Activated CD8-positive, alpha-beta T cell treated with anti-CD3 and anti-CD28 coated beads for 36 hours (primary cell): ENCODE measurements at regions of chr20 and their contacts with region 1.

Region 1: GRCh38 chr20:35303735-35304491 is 11.7 kb upstream of the FAM83C start:
- DNase-seq: peak; percentile 94
- ATAC-seq: peak; percentile 64
- H3K4me3 Mint-ChIP-seq: no peak overlapping the region
- H3K27ac Mint-ChIP-seq: peak overlapping the region; percentile 50
- H3K4me1 Mint-ChIP-seq: peaks cover 54% of the 10 kb centered on the region
- H3K27me3 Mint-ChIP-seq: no peaks in the 10 kb centered on the region
- CTCF ChIP-seq: peak; percentile 91

Region 2: DNA sequence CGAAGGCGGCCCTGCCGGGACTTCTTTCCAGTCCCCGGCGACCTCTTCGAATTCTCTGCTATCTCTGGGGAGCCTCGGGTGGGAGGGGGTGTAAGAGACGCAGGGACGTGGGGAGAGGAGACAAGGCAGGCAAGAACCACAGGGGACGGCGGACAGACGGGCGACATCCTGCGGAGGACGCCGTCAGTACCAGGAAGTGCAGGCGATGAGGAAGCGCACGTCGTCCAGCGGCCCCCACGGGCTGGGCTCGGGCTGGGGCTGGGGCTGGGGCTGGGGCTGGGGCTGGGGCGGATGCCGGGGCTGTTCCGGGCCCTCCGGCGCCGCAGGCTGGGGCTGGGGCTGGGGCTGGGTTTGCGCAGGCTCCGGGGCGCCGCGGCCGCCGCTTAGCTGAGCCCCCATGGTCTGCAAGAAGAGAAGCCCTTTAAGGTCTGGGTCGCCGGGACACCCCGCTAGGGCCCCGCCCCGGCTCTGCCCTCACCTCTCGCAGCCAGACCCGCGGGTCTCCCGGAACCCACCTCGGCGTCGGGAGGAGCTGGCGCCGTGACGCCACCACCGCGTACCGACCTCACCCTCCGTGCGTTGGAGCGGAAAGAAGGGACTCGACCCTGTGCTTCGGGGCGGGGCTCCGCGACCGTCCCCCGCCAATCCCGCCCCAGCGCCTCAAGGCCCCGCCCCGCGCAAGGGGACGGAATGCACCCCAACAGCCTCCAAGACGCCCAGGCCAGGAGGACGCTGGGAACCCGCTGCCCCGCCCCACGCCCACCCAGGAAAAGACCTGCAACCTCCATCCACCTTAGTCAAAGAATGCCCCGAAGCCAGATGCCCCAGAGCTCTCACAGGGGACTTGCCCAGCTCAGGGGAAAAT is 26.1 kb before region 1 on chr20 and contains the start of gene MMP24OS:
- CTCF ChIA-PET with region 1: interaction called, 22 read pairs
- POLR2A ChIA-PET with region 1: no interaction called
- intact Hi-C with region 1: no loop called
- DNase-seq: peak; percentile 93
- ATAC-seq: peak; percentile 95
- H3K4me3 Mint-ChIP-seq: peak within 1 kb of the TSS; percentile 98
- H3K27ac Mint-ChIP-seq: peak within 1 kb of the TSS; percentile 99
- H3K4me1 Mint-ChIP-seq: peaks cover 16% of the 10 kb centered on the region
- H3K27me3 Mint-ChIP-seq: no peaks in the 10 kb centered on the region
- CTCF ChIP-seq: no peak
- total RNA-seq, gene MMP24OS: 46.6 to 48.4 TPM

Region 3: GRCh38 chr20:35292376-35293285 is 11.3 kb before region 1 on chr20 and contains the start of gene FAM83C:
- CTCF ChIA-PET with region 1: interaction called, 13 read pairs
- POLR2A ChIA-PET with region 1: interaction called, 4 read pairs
- intact Hi-C with region 1: no loop called
- DNase-seq: no peak
- ATAC-seq: no peak
- H3K4me3 Mint-ChIP-seq: no peak within 1 kb of the TSS
- H3K27ac Mint-ChIP-seq: no peak within 1 kb of the TSS
- H3K4me1 Mint-ChIP-seq: no peaks in the 10 kb centered on the region
- H3K27me3 Mint-ChIP-seq: no peaks in the 10 kb centered on the region
- CTCF ChIP-seq: no peak
- total RNA-seq, gene FAM83C: not detected

Region 4: GRCh38 chr20:35329435-35330139 is 25.7 kb after region 1 on chr20:
- CTCF ChIA-PET with region 1: interaction called, 91 read pairs
- POLR2A ChIA-PET with region 1: interaction called, 4 read pairs
- intact Hi-C with region 1: no loop called
- DNase-seq: peak; percentile 80
- ATAC-seq: peak; percentile 87
- H3K4me3 Mint-ChIP-seq: no peak overlapping the region
- H3K27ac Mint-ChIP-seq: no peak overlapping the region
- H3K4me1 Mint-ChIP-seq: peaks cover 45% of the 10 kb centered on the region
- H3K27me3 Mint-ChIP-seq: no peaks in the 10 kb centered on the region
- CTCF ChIP-seq: peak; percentile 70

Region 5: GRCh38 chr20:35437491-35437998 is 133.6 kb after region 1 on chr20:
- CTCF ChIA-PET with region 1: interaction called, 20 read pairs
- POLR2A ChIA-PET with region 1: no interaction called
- intact Hi-C with region 1: no loop called
- DNase-seq: no peak
- ATAC-seq: no peak
- H3K4me3 Mint-ChIP-seq: no peak overlapping the region
- H3K27ac Mint-ChIP-seq: no peak overlapping the region
- H3K4me1 Mint-ChIP-seq: peaks cover 1% of the 10 kb centered on the region
- H3K27me3 Mint-ChIP-seq: peaks cover 6% of the 10 kb centered on the region
- CTCF ChIP-seq: no peak

Region 6: GRCh38 chr20:35454881-35455609 is 151.1 kb after region 1 on chr20 and contains the start of gene CEP250:
- CTCF ChIA-PET with region 1: interaction called, 85 read pairs
- POLR2A ChIA-PET with region 1: no interaction called
- intact Hi-C with region 1: no loop called
- DNase-seq: peak; percentile 96
- ATAC-seq: peak; percentile 99
- H3K4me3 Mint-ChIP-seq: peak within 1 kb of the TSS; percentile 90
- H3K27ac Mint-ChIP-seq: peak within 1 kb of the TSS; percentile 99
- H3K4me1 Mint-ChIP-seq: peaks cover 21% of the 10 kb centered on the region
- H3K27me3 Mint-ChIP-seq: no peaks in the 10 kb centered on the region
- CTCF ChIP-seq: no peak
- total RNA-seq, gene CEP250: 56.0 to 60.3 TPM